PC-3 (cell line): ENCODE measurements at regions of chr1 and their contacts with region 1.

Region 1: GRCh38 chr1:65687428-65688214 is 105.1 kb upstream of the PDE4B start:
- DNase-seq: peak; percentile 83
- ATAC-seq: peak; percentile 89
- H3K4me3 ChIP-seq: no peak overlapping the region
- H3K27ac ChIP-seq: no peak overlapping the region
- H3K4me1 ChIP-seq: no peaks in the 10 kb centered on the region
- H3K27me3 ChIP-seq: peaks cover 26% of the 10 kb centered on the region; the same call in 1 of the 2 replicates
- CTCF ChIP-seq: peak; percentile 90

Region 2: DNA sequence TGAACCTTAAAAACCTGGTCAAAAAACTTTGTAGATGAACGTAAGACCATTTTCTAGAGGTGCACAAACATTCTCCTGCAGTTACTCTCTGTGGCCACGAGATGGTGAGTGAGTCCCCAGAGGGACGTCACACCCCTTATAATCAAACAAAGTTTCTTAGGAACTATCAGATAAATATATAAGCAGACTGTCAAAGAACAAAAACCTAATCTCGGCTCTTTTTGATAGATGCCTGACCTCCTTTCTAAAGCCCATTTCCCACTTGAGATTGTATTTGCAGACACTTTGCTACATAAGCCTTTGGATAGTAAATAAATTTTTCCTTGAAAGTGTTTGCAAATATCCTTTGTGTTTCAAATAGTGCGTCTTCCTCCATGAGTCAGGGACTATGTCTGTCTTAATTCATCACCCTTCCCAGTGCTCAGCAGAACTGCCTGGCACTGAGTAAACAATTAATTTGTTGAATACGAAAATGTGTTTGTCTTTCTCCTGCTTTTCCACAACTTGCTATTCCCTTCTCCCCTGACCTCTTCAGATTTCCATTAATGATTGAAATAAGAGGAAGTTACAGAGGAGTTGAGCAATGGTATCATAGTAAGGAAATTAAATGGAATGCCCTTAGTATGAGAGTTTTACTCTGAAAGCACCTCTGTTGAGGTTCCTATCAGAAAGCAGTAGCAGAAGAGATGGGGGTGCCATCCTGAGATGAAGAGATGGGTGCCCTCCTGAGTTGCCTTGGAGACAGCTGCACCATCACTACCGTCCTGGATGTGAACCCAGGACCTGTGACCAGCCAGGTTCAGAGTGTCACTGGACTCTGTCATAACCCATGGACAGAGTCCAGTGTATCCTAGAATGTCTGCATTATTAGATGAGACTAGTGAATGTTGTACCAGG is 1000.5 kb before region 1 on chr1:
- CTCF ChIA-PET with region 1: no interaction called
- POLR2A ChIA-PET with region 1: no interaction called
- intact Hi-C with region 1: loop called (anchors 2 kb)
- DNase-seq: peak; percentile 76
- ATAC-seq: peak; percentile 81
- H3K4me3 ChIP-seq: peak overlapping the region; percentile 25; the same call in 1 of the 2 replicates
- H3K27ac ChIP-seq: peak overlapping the region; percentile 70
- H3K4me1 ChIP-seq: peaks cover 28% of the 10 kb centered on the region
- H3K27me3 ChIP-seq: no peaks in the 10 kb centered on the region
- CTCF ChIP-seq: peak; percentile 90

Region 3: GRCh38 chr1:65059930-65060538 is 627.6 kb before region 1 on chr1:
- CTCF ChIA-PET with region 1: interaction called, 5 read pairs
- POLR2A ChIA-PET with region 1: no interaction called
- intact Hi-C with region 1: loop called (anchors 1 kb)
- DNase-seq: peak; percentile 67
- ATAC-seq: no peak
- H3K4me3 ChIP-seq: no peak overlapping the region
- H3K27ac ChIP-seq: no peak overlapping the region
- H3K4me1 ChIP-seq: no peaks in the 10 kb centered on the region
- H3K27me3 ChIP-seq: no peaks in the 10 kb centered on the region
- CTCF ChIP-seq: peak; percentile 73

Region 4: GRCh38 chr1:65209005-65209885 is 478.4 kb before region 1 on chr1:
- CTCF ChIA-PET with region 1: no interaction called
- POLR2A ChIA-PET with region 1: no interaction called
- intact Hi-C with region 1: loop called (anchors 2 kb)
- DNase-seq: peak; percentile 70
- ATAC-seq: peak; percentile 77
- H3K4me3 ChIP-seq: no peak overlapping the region
- H3K27ac ChIP-seq: no peak overlapping the region
- H3K4me1 ChIP-seq: no peaks in the 10 kb centered on the region
- H3K27me3 ChIP-seq: no peaks in the 10 kb centered on the region
- CTCF ChIP-seq: peak; percentile 77

Region 5: GRCh38 chr1:65235867-65236805 is 451.5 kb before region 1 on chr1:
- CTCF ChIA-PET with region 1: interaction called, 3 read pairs
- POLR2A ChIA-PET with region 1: no interaction called
- intact Hi-C with region 1: loop called (anchors 1 kb)
- DNase-seq: peak; percentile 72
- ATAC-seq: no peak
- H3K4me3 ChIP-seq: no peak overlapping the region
- H3K27ac ChIP-seq: no peak overlapping the region
- H3K4me1 ChIP-seq: no peaks in the 10 kb centered on the region
- H3K27me3 ChIP-seq: no peaks in the 10 kb centered on the region
- CTCF ChIP-seq: peak; percentile 80

Region 6: GRCh38 chr1:65431111-65431705 is 256.4 kb before region 1 on chr1:
- CTCF ChIA-PET with region 1: interaction called, 3 read pairs
- POLR2A ChIA-PET with region 1: no interaction called
- intact Hi-C with region 1: loop called (anchors 5 kb)
- DNase-seq: peak; percentile 58
- ATAC-seq: no peak
- H3K4me3 ChIP-seq: no peak overlapping the region
- H3K27ac ChIP-seq: no peak overlapping the region
- H3K4me1 ChIP-seq: peaks cover 22% of the 10 kb centered on the region
- H3K27me3 ChIP-seq: no peaks in the 10 kb centered on the region
- CTCF ChIP-seq: peak; percentile 71

Region 7: DNA sequence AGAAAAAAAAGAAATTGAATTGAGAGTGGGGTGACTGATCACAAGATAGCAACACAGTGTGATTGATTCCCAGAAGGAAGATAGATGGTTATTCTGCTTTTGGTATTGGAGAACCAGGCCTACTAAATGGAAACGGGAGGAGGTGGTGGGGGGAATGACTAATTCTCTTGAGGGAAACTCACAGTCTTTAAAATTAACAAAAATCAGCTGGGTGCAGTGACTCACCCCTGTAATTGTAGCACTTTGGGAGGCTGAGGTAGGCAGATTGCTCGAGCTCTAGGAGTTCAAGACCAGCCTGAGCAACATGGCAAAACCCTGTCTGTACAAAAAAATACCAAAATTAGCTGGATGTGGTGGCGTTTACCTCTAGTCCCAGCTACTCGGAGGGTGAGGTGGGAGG is 29.5 kb before region 1 on chr1:
- CTCF ChIA-PET with region 1: no interaction called
- POLR2A ChIA-PET with region 1: no interaction called
- intact Hi-C with region 1: no loop called
- DNase-seq: peak; percentile 14
- ATAC-seq: no peak
- H3K4me3 ChIP-seq: no peak overlapping the region
- H3K27ac ChIP-seq: no peak overlapping the region
- H3K4me1 ChIP-seq: no peaks in the 10 kb centered on the region
- H3K27me3 ChIP-seq: peaks cover 41% of the 10 kb centered on the region
- CTCF ChIP-seq: no peak

Region 8: DNA sequence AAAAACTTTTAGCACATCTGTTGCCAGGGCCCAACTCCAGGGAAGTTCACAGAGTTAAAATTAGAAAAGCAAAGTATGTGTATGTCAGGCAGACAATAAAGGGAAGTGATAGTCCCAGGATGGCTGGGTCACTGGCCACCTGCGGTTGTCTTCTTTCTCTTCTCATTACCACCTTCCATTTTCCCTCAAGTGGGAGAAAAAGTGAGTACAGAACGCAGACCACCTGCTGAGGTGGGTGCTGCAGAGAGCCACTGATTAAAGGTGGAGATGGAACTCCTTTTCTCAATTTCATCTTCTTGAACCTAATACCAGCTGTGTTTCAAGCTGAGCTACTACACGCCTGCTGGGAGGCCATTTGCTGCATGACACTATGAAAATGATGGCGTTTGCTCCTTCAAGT is 16.2 kb after region 1 on chr1:
- CTCF ChIA-PET with region 1: no interaction called
- POLR2A ChIA-PET with region 1: no interaction called
- intact Hi-C with region 1: no loop called
- DNase-seq: no peak
- ATAC-seq: no peak
- H3K4me3 ChIP-seq: no peak overlapping the region
- H3K27ac ChIP-seq: no peak overlapping the region
- H3K4me1 ChIP-seq: no peaks in the 10 kb centered on the region
- H3K27me3 ChIP-seq: peaks cover 86% of the 10 kb centered on the region
- CTCF ChIP-seq: no peak

Region 9: GRCh38 chr1:65904681-65905083 is 217.1 kb after region 1 on chr1:
- CTCF ChIA-PET with region 1: no interaction called
- POLR2A ChIA-PET with region 1: no interaction called
- intact Hi-C with region 1: no loop called
- DNase-seq: no peak
- ATAC-seq: no peak
- H3K4me3 ChIP-seq: no peak overlapping the region
- H3K27ac ChIP-seq: no peak overlapping the region
- H3K4me1 ChIP-seq: no peaks in the 10 kb centered on the region
- H3K27me3 ChIP-seq: peaks cover 37% of the 10 kb centered on the region
- CTCF ChIP-seq: no peak